ENCODE measurements at regions of chr4 and their contacts with region 1.

Region 1: DNA sequence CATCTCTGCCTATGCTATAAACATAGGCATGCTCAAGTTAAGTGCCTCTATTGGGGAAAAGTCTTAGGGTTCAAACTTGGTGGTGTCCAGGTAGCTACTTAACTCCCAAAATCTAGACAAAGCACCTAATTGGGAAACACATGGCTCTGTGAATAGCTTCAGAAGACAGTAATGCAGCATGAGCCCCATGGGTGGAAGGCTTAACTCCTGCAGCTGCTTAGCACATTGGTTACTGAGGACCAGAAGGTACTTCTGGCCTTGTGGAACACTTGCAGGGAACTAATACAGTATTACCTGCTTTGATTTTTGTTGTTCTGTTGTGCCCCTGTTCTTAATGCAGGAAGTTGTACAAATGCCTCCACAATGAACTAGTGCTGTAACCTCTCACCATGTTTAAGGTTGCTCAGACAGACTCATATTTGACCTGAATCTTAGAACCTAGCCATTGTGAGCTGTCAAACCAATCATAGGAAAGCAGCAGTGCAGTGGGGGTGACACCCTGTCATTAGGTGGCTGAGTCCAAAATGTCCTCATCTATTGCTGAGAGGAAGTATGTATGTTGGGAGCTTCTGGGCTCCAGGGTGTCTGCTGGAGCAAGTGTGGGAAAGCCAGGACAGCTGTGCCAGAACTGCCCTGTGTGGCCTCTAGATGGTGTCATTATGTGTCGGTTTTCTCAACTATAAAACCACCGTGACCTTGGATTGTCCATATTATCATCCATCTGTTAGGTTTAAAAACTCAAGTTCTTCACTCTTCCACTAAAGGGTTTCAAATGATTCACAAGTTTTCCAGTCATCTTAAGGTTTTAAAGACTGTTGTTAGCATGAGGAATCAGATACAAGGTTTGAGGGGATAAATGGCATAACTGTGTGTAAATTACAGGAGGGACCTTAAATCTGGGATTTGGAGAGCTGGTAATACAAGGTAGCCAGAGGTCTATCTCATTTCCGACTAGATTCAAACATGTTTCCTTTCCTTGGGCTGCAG is 69.9 kb upstream of the WDR1 start:
- DNase-seq: peak; percentile 60 to 81 (median 65)
- ATAC-seq: peak; percentile 67
- H3K4me3 ChIP-seq: no peak overlapping the region
- H3K27ac ChIP-seq: peak overlapping the region; percentile 100
- H3K4me1 ChIP-seq: peaks cover 27 to 87% of the 10 kb centered on the region in 2 experiments
- H3K27me3 ChIP-seq: no peaks in the 10 kb centered on the region
- CTCF ChIP-seq: peak; percentile 60 to 78 (median 75)
- EP300 ChIP-seq: peak; percentile 54
- POLR2A ChIP-seq: no peak
- RAD21 ChIP-seq: peak; percentile 64 to 68

Region 2: GRCh38 chr4:10164877-10165283 is 21.6 kb before region 1 on chr4:
- CTCF ChIA-PET with region 1: interaction called, 3 read pairs
- POLR2A ChIA-PET with region 1: interaction called, 6 read pairs
- in situ Hi-C with region 1: no loop called
- intact Hi-C with region 1: loop called (anchors 2 kb)
- DNase-seq: peak; percentile 68 to 86 (median 72)
- ATAC-seq: peak; percentile 64
- H3K4me3 ChIP-seq: no peak overlapping the region
- H3K27ac ChIP-seq: peak overlapping the region; percentile 15; the same call in 1 of the 3 replicates
- H3K4me1 ChIP-seq: peaks cover 0 to 60% of the 10 kb centered on the region in 2 experiments; a peak in 4 of 5 replicates
- H3K27me3 ChIP-seq: no peaks in the 10 kb centered on the region
- CTCF ChIP-seq: peak; percentile 72 to 88 (median 83)
- EP300 ChIP-seq: no peak; the same call in 1 of the 2 replicates
- POLR2A ChIP-seq: no peak
- RAD21 ChIP-seq: peak; percentile 89 to 96

Region 3: DNA sequence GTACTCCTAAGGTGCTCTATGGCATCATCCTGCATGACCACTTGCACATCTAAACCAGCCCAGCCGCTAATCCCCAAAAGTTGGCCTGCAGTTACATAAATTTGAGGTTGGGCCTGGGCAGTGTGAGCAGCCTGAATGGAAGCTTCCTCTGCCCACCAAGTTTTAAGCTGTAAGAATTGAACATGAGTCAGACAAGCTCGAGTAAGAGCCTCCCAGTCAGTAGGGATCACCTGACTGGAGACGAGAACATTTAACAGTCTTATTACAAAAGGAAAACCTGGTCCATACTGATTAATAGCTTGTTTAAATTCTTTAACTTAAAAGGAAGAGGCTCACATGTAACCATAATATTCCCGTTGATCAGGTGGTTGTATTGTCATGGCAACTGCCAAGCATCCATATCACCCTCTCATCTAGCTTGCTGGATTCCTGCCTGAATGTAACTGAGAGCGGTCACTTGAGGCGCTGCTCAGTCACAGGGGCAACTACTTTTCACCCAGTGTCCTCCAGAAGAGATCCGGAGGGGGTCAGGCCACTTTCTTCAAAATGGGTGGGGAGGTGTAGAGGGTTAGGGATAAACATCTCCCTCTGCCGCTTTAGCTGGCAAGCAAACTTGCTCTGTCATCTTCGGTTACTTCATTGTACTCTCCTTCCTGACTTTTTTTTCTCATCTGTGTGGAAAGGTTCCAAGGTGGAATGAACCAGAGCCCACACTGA is 13.3 kb before region 1 on chr4:
- CTCF ChIA-PET with region 1: interaction called, 3 read pairs
- POLR2A ChIA-PET with region 1: interaction called, 37 read pairs
- in situ Hi-C with region 1: no loop called
- intact Hi-C with region 1: loop called (anchors 1 kb)
- DNase-seq: peak; percentile 83 to 96 (median 86)
- ATAC-seq: peak; percentile 90
- H3K4me3 ChIP-seq: no peak overlapping the region; the same call in 1 of the 2 replicates
- H3K27ac ChIP-seq: peak overlapping the region; percentile 93
- H3K4me1 ChIP-seq: peaks cover 27 to 76% of the 10 kb centered on the region in 2 experiments
- H3K27me3 ChIP-seq: no peaks in the 10 kb centered on the region
- CTCF ChIP-seq: peak; percentile 90 to 97 (median 92)
- EP300 ChIP-seq: peak; percentile 95
- POLR2A ChIP-seq: no peak
- RAD21 ChIP-seq: peak; percentile 89 to 90

Region 4: GRCh38 chr4:10198365-10198764 is 11.8 kb after region 1 on chr4:
- CTCF ChIA-PET with region 1: no interaction called
- POLR2A ChIA-PET with region 1: interaction called, 20 read pairs
- in situ Hi-C with region 1: no loop called
- intact Hi-C with region 1: loop called (anchors 2 kb)
- DNase-seq: no peak
- ATAC-seq: no peak
- H3K4me3 ChIP-seq: no peak overlapping the region
- H3K27ac ChIP-seq: peak overlapping the region; percentile 55
- H3K4me1 ChIP-seq: peaks cover 22 to 60% of the 10 kb centered on the region in 2 experiments
- H3K27me3 ChIP-seq: no peaks in the 10 kb centered on the region
- CTCF ChIP-seq: no peak
- EP300 ChIP-seq: no peak
- POLR2A ChIP-seq: no peak
- RAD21 ChIP-seq: no peak

Region 5: DNA sequence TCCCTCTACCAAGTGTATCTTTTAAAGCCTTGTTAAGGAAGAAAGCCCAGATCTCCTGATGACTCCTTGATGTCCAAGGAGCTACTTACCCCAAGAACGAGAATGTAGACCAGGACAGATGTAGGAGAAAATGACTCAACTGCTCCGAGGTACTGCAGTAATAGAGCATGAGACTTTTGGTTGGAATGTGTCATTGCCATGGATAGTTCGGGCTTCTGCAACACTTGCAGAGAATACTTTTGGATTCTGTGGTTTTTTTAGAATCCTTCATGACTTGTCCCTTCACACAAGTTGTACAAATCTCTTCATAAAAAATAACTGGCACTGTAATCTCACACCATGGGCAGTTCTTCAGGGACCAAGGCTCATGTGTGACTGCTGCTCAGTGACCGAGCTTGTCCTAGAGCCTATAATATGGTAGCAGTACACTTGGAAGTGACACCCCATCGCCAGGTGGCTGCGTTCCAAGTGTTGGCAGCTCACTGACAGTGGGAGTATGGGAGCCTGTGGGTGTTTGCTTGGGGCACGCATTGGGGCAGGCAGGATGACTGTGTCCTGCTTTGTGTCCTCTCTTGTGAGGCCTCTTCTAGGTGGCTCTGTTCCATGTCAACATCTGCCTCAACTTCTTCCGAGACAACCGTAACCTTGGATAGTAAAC is 18.0 kb after region 1 on chr4:
- CTCF ChIA-PET with region 1: no interaction called
- POLR2A ChIA-PET with region 1: interaction called, 7 read pairs
- in situ Hi-C with region 1: no loop called
- intact Hi-C with region 1: loop called (anchors 2 kb)
- DNase-seq: no peak
- ATAC-seq: no peak
- H3K4me3 ChIP-seq: no peak overlapping the region
- H3K27ac ChIP-seq: peak overlapping the region; percentile 26
- H3K4me1 ChIP-seq: peaks cover 20 to 60% of the 10 kb centered on the region in 2 experiments
- H3K27me3 ChIP-seq: no peaks in the 10 kb centered on the region
- CTCF ChIP-seq: no peak
- EP300 ChIP-seq: no peak
- POLR2A ChIP-seq: no peak
- RAD21 ChIP-seq: no peak

Region 6: GRCh38 chr4:10506077-10506476 is 319.6 kb after region 1 on chr4:
- CTCF ChIA-PET with region 1: no interaction called
- POLR2A ChIA-PET with region 1: no interaction called
- in situ Hi-C with region 1: no loop called
- intact Hi-C with region 1: no loop called
- DNase-seq: no peak
- ATAC-seq: no peak
- H3K4me3 ChIP-seq: no peak overlapping the region
- H3K27ac ChIP-seq: no peak overlapping the region
- H3K4me1 ChIP-seq: no peaks in the 10 kb centered on the region
- H3K27me3 ChIP-seq: peaks cover 4 to 5% of the 10 kb centered on the region in 2 experiments; a peak in 4 of 5 replicates
- CTCF ChIP-seq: no peak
- EP300 ChIP-seq: no peak
- POLR2A ChIP-seq: no peak
- RAD21 ChIP-seq: no peak

Measured in K562 (cell line).